CD4-positive, alpha-beta T cell (primary cell): ENCODE measurements at regions of chr4 and their contacts with region 1.

Region 1: GRCh38 chr4:16026160-16026761 is 57.6 kb downstream of the PROM1 start:
- DNase-seq: peak in 5 of 14 experiments; percentile 3 to 78 (median 65)
- ATAC-seq: no peak
- H3K4me3 ChIP-seq: no peak overlapping the region
- H3K4me3 Mint-ChIP-seq: no peak overlapping the region
- H3K27ac ChIP-seq: no peak overlapping the region
- H3K27ac Mint-ChIP-seq: no peak overlapping the region
- H3K4me1 ChIP-seq: no peaks in the 10 kb centered on the region
- H3K4me1 Mint-ChIP-seq: no peaks in the 10 kb centered on the region
- H3K27me3 ChIP-seq: peaks cover 0 to 2% of the 10 kb centered on the region in 2 experiments
- H3K27me3 Mint-ChIP-seq: peaks cover 14% of the 10 kb centered on the region
- CTCF ChIP-seq: peak; percentile 96

Region 2: GRCh38 chr4:16205298-16206164 is 179.3 kb after region 1 on chr4:
- CTCF ChIA-PET with region 1: no interaction called
- POLR2A ChIA-PET with region 1: no interaction called
- intact Hi-C with region 1: loop called in 1 of 2 experiments (anchors 10 kb)
- DNase-seq: peak in 3 of 14 experiments; percentile 37 to 54 (median 48)
- ATAC-seq: peak; percentile 89
- H3K4me3 ChIP-seq: no peak overlapping the region
- H3K4me3 Mint-ChIP-seq: no peak overlapping the region
- H3K27ac ChIP-seq: no peak overlapping the region
- H3K27ac Mint-ChIP-seq: peak overlapping the region; percentile 24
- H3K4me1 ChIP-seq: peaks cover 12% of the 10 kb centered on the region
- H3K4me1 Mint-ChIP-seq: peaks cover 67% of the 10 kb centered on the region
- H3K27me3 ChIP-seq: no peaks in the 10 kb centered on the region
- H3K27me3 Mint-ChIP-seq: no peaks in the 10 kb centered on the region
- CTCF ChIP-seq: peak; percentile 77

Region 3: GRCh38 chr4:16443504-16444088 is 417.3 kb after region 1 on chr4:
- CTCF ChIA-PET with region 1: no interaction called
- POLR2A ChIA-PET with region 1: no interaction called
- intact Hi-C with region 1: loop called (anchors 2 to 5 kb)
- DNase-seq: peak in 3 of 14 experiments; percentile 9 to 46 (median 34)
- ATAC-seq: no peak
- H3K4me3 ChIP-seq: no peak overlapping the region
- H3K4me3 Mint-ChIP-seq: no peak overlapping the region
- H3K27ac ChIP-seq: no peak overlapping the region
- H3K27ac Mint-ChIP-seq: no peak overlapping the region
- H3K4me1 ChIP-seq: no peaks in the 10 kb centered on the region
- H3K4me1 Mint-ChIP-seq: no peaks in the 10 kb centered on the region
- H3K27me3 ChIP-seq: no peaks in the 10 kb centered on the region
- H3K27me3 Mint-ChIP-seq: peaks cover 4% of the 10 kb centered on the region
- CTCF ChIP-seq: peak; percentile 57

Region 4: DNA sequence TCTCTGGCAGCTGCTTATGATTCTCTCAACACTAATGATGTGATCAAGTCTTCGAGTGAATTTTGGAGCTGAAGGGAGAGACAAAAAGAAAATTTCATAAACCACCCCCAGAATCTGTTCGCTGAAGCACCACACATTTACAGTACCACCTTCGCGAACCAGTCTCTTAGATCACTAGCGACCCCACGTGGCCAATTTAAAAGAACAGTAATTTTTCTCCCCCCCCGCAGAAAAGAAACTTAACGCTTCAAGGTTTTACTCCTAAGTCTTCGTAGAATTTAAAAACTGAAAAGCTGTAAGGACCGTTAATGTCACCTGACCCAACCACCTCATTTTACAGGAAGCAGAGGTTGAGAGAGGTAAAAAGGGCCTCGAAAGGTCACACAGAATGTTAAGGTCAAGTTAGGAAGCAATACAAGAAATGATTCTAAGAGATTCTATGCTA is 1298.1 kb after region 1 on chr4:
- CTCF ChIA-PET with region 1: no interaction called
- POLR2A ChIA-PET with region 1: no interaction called
- intact Hi-C with region 1: loop called in 1 of 2 experiments (anchors 10 kb)
- DNase-seq: peak in 13 of 14 experiments; percentile 11 to 67 (median 33)
- ATAC-seq: peak; percentile 68
- H3K4me3 ChIP-seq: no peak overlapping the region
- H3K4me3 Mint-ChIP-seq: peak overlapping the region; percentile 50
- H3K27ac ChIP-seq: no peak overlapping the region
- H3K27ac Mint-ChIP-seq: no peak overlapping the region
- H3K4me1 ChIP-seq: peaks cover 8% of the 10 kb centered on the region
- H3K4me1 Mint-ChIP-seq: peaks cover 11% of the 10 kb centered on the region
- H3K27me3 ChIP-seq: no peaks in the 10 kb centered on the region
- H3K27me3 Mint-ChIP-seq: no peaks in the 10 kb centered on the region
- CTCF ChIP-seq: peak; percentile 63